Sigmoid colon (tissue), 7 donors: ENCODE measurements at regions of chr16 and their contacts with region 1.

Region 1: DNA sequence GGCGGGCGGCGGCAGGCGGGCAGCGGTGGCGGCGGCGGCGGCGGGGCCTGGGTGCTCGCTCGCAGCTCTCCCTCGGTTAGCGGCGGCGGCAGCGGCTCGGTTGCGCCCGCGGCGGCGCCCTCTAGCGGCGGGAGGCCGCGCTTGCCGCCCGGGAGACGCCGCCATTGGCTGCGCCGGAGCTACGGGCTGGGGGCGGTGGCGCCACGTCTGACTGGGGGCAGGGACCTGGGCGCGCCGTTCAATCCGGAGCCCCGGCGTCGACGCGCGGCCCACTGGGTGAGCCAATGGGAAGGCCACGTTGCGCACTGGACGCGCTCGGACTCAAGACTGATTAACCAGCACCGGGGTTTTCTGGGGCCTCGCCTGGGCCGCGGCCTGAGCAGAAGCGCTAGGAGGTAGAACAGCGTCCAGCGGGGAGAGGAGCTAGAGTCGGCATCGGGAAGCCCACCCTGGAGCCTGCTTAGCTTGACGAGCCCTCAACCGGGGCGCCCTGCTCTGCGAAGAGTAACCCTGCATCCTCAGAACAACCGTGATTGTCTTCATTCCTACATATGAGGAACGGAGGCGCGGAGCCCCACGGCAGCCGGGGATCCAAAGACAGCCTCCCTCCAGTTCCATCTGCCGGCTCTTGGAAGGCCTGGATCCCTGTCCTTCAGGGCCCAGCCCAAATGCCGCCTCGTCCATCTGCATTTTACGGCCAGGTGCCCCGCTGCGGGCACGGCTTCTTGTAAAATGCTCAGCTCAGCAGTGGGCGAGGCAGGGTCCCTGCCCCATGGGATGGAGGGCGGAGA is at the start of gene ZC3H7A:
- DNase-seq: peak; percentile 99
- H3K4me3 ChIP-seq: peak within 1 kb of the TSS; percentile 68 to 98 (median 95)
- H3K27ac ChIP-seq: peak within 1 kb of the TSS; percentile 95 to 99 (median 98)
- H3K4me1 ChIP-seq: peaks cover 0 to 65% (median 58%) of the 10 kb centered on the region in 4 donors
- H3K27me3 ChIP-seq: no peaks in the 10 kb centered on the region
- CTCF ChIP-seq: peak in 2 of 4 experiments; percentile 42 to 63
- EP300 ChIP-seq: no peak
- POLR2A ChIP-seq: peak; percentile 93 to 95
- total RNA-seq, gene ZC3H7A: 45.5 to 62.5 (median 55.7) TPM

Region 2: DNA sequence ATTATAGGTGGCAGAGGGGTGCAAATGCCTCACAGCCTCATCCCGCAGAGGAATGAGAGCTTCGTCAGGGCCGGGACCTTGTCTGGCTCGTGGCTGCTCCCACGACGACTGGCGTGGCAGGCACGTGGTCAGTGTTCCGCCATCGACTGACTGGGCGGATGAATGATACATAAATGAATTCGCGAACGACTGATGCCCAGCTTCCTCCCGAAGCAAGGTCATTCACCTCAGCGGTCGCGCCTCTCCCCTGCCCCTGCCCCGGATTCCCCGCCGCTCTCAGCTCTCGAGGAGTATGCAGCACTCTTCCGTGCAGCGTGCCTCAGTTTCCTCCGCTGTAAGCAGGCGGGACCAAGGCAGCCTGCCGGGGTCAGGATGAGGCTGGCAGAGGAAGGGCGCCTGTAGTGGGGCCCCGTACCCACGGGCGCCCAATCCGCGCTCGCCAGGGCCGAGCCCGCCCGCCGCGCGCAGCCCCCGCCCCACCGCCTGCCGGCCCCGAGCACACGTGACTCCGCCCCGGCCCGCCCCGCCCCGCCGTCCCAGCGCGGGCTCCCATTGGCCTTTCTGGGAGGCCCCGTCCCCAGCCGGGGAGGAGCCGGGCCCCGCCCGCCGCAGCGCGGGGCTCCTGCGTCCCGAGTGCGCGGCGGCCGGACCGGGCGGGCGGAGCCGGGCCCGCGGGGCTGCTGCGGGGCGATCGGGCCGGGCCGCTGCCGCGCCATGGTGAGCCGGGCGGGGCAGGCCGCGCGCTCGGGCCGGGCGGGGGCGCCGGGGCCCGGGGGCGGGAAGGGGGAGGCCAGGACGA is 129.3 kb before region 1 on chr16 and contains the start of gene SNN:
- intact Hi-C with region 1: loop called (anchors 10 kb)
- DNase-seq: peak; percentile 93
- H3K4me3 ChIP-seq: peak within 1 kb of the TSS; percentile 54 to 100 (median 98)
- H3K27ac ChIP-seq: peak within 1 kb of the TSS; percentile 75 to 84 (median 82)
- H3K4me1 ChIP-seq: peaks cover 0 to 48% (median 45%) of the 10 kb centered on the region in 4 donors
- H3K27me3 ChIP-seq: no peaks in the 10 kb centered on the region
- CTCF ChIP-seq: no peak
- EP300 ChIP-seq: no peak
- POLR2A ChIP-seq: no peak
- total RNA-seq, gene SNN: 10.8 to 15.3 (median 13.5) TPM

Region 3: GRCh38 chr16:11706180-11706742 is 91.1 kb before region 1 on chr16:
- intact Hi-C with region 1: no loop called
- DNase-seq: no peak
- H3K4me3 ChIP-seq: no peak overlapping the region
- H3K27ac ChIP-seq: peak overlapping the region in 1 of 4 donors; percentile 0
- H3K4me1 ChIP-seq: peaks cover 0 to 12% (median 8%) of the 10 kb centered on the region in 4 donors
- H3K27me3 ChIP-seq: no peaks in the 10 kb centered on the region
- CTCF ChIP-seq: no peak
- EP300 ChIP-seq: no peak
- POLR2A ChIP-seq: no peak

Region 4: GRCh38 chr16:11851294-11852091 is 54.1 kb after region 1 on chr16 and contains the start of gene RSL1D1:
- intact Hi-C with region 1: loop called (anchors 2 kb)
- DNase-seq: peak; percentile 96
- H3K4me3 ChIP-seq: peak within 1 kb of the TSS; percentile 63 to 97 (median 94)
- H3K27ac ChIP-seq: peak within 1 kb of the TSS; percentile 82 to 94 (median 92)
- H3K4me1 ChIP-seq: peaks cover 0 to 45% (median 40%) of the 10 kb centered on the region in 4 donors
- H3K27me3 ChIP-seq: no peaks in the 10 kb centered on the region
- CTCF ChIP-seq: no peak
- EP300 ChIP-seq: peak in 1 of 4 donors; percentile 64
- POLR2A ChIP-seq: peak; percentile 83 to 87
- total RNA-seq, gene RSL1D1: 134 to 177 (median 148) TPM

Region 5: GRCh38 chr16:11871193-11871592 is 73.8 kb after region 1 on chr16:
- intact Hi-C with region 1: no loop called
- DNase-seq: no peak
- H3K4me3 ChIP-seq: no peak overlapping the region
- H3K27ac ChIP-seq: peak overlapping the region in 1 of 4 donors; percentile 20
- H3K4me1 ChIP-seq: peaks cover 0 to 24% (median 15%) of the 10 kb centered on the region in 4 donors
- H3K27me3 ChIP-seq: no peaks in the 10 kb centered on the region
- CTCF ChIP-seq: no peak
- EP300 ChIP-seq: no peak
- POLR2A ChIP-seq: no peak

Region 6: GRCh38 chr16:11977376-11978041 is 180.1 kb after region 1 on chr16:
- intact Hi-C with region 1: loop called (anchors 5 kb)
- DNase-seq: peak; percentile 80
- H3K4me3 ChIP-seq: peak overlapping the region; percentile 76 to 98 (median 92)
- H3K27ac ChIP-seq: peak overlapping the region; percentile 82 to 92 (median 90)
- H3K4me1 ChIP-seq: peaks cover 0 to 29% (median 23%) of the 10 kb centered on the region in 4 donors
- H3K27me3 ChIP-seq: no peaks in the 10 kb centered on the region
- CTCF ChIP-seq: no peak
- EP300 ChIP-seq: no peak
- POLR2A ChIP-seq: no peak